ENCODE measurements at regions of chr5 and their contacts with region 1.

Region 1: GRCh38 chr5:147558826-147559225 is 49.0 kb upstream of the DPYSL3 start:
- DNase-seq: peak in 1 of 2 experiments; percentile 74
- H3K4me3 ChIP-seq: no peak overlapping the region
- H3K27ac ChIP-seq: no peak overlapping the region
- H3K4me1 ChIP-seq: peaks cover 5 to 26% (median 15%) of the 10 kb centered on the region in 4 experiments; a peak in 6 of 7 replicates
- H3K27me3 ChIP-seq: no peaks in the 10 kb centered on the region
- CTCF ChIP-seq: peak; percentile 59 to 83 (median 70)
- EP300 ChIP-seq: no peak
- POLR2A ChIP-seq: no peak
- RAD21 ChIP-seq: peak; percentile 86 to 91

Region 2: GRCh38 chr5:147321569-147321968 is 237.3 kb before region 1 on chr5:
- CTCF ChIA-PET with region 1: no interaction called
- POLR2A ChIA-PET with region 1: no interaction called
- DNase-seq: no peak
- H3K4me3 ChIP-seq: no peak overlapping the region
- H3K27ac ChIP-seq: no peak overlapping the region
- H3K4me1 ChIP-seq: peaks cover 0 to 2% (median 0%) of the 10 kb centered on the region in 4 experiments; a peak in 1 of 7 replicates
- H3K27me3 ChIP-seq: no peaks in the 10 kb centered on the region
- CTCF ChIP-seq: no peak
- EP300 ChIP-seq: no peak
- POLR2A ChIP-seq: no peak
- RAD21 ChIP-seq: no peak

Region 3: GRCh38 chr5:147391781-147392180 is 167.0 kb before region 1 on chr5:
- CTCF ChIA-PET with region 1: interaction called, 20 read pairs
- POLR2A ChIA-PET with region 1: interaction called, 4 read pairs
- DNase-seq: no peak
- H3K4me3 ChIP-seq: no peak overlapping the region
- H3K27ac ChIP-seq: no peak overlapping the region
- H3K4me1 ChIP-seq: peaks cover 4 to 10% (median 8%) of the 10 kb centered on the region in 4 experiments; a peak in 5 of 7 replicates
- H3K27me3 ChIP-seq: no peaks in the 10 kb centered on the region; a peak in 1 of 7 replicates
- CTCF ChIP-seq: peak; percentile 2 to 67 (median 16); a peak in 3 of 4 replicates
- EP300 ChIP-seq: no peak
- POLR2A ChIP-seq: peak in 1 of 2 experiments; percentile 45; a peak in 1 of 3 replicates
- RAD21 ChIP-seq: peak; percentile 50 to 65

Region 4: DNA sequence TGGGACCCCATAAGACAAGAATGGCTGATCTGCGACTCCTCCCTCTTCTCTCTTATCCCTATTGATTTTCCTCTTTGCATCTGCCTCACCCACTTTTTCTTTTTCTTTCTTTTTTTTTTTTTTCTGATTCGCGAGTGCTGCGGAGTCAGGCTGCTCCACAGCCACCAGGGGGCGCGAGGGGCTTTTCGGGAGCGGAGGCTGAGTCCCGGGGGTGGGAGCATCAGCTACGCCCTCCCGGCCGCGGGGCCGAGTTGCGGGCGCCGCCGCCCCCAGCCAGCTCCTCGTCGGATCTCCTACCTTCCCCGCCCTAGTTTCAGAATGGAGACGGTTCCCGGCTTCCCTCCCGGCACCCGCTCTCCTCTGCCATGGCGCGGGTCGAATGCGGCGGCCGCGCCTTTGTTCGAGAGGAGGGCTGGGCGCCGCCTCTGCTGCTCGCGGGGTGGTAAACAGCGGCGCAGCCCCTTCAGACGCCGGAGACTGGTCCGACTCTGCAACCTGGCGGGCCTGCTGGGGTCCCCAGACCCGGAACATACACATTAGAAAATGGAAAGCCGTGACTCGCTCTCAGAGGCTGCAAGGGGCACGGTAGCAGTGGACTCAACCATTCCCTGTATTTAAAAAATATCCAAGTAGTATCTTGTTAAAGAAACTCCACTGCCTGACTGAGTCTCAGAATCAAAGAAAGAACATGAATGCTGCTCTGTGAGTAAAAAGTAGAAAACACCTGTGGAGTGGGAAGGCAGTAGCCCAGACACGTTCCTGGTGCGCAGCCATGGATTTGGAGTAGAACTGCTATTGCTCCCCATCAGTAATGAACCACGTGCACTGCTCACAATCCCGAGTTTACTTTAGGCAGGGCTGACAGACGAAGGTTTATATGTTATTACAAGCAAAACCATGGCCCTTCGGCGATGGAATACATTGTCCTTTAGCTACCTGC is 104.7 kb before region 1 on chr5:
- CTCF ChIA-PET with region 1: interaction called, 48 read pairs
- POLR2A ChIA-PET with region 1: interaction called, 47 read pairs
- DNase-seq: peak; percentile 70 to 94
- H3K4me3 ChIP-seq: peak overlapping the region; percentile 80 to 98 (median 94)
- H3K27ac ChIP-seq: peak overlapping the region; percentile 79; the same call in 1 of the 2 replicates
- H3K4me1 ChIP-seq: peaks cover 9 to 30% (median 25%) of the 10 kb centered on the region in 4 experiments; a peak in 6 of 7 replicates
- H3K27me3 ChIP-seq: no peaks in the 10 kb centered on the region
- CTCF ChIP-seq: peak; percentile 70 to 83 (median 70)
- EP300 ChIP-seq: no peak
- POLR2A ChIP-seq: peak in 1 of 2 experiments; percentile 58; a peak in 2 of 3 replicates
- RAD21 ChIP-seq: peak; percentile 76 to 77

Region 5: DNA sequence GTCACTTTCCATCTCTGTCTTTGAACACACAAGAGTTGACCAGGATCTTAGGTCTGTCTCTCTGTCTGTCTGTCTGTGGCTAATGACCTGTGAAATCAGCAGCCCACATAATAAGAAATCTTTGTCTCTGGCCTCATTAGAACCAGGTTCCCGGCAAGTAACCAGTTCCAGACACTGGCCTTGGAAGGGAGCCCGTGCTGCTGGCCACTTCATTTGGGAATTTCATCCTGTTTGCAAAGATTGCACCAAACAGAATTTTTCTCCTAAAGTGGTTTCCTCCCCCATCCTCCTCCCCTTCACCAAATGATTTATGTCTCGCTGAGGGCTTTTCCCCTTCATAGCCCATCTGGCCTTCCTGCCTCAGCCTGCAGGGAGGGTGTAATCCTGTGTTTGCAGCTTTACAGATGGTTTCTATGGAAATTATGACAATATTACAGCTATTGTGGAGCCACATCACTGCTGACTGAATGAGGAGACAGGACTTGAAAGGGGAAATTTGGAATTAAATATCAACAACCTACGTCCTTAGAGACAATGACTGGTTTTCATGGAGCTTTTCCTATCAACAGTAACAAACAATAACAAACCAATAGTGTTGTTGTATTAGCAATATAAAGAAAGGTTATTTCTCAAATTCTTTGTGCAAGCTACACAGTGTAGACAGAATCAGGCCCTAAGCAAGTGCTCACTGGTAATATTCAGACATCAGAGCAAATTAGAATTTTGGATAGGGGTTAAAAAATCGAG is 74.7 kb before region 1 on chr5:
- CTCF ChIA-PET with region 1: interaction called, 38 read pairs
- POLR2A ChIA-PET with region 1: interaction called, 4 read pairs
- DNase-seq: no peak
- H3K4me3 ChIP-seq: no peak overlapping the region
- H3K27ac ChIP-seq: peak overlapping the region; percentile 15; the same call in 1 of the 2 replicates
- H3K4me1 ChIP-seq: peaks cover 0 to 24% (median 15%) of the 10 kb centered on the region in 4 experiments; a peak in 5 of 7 replicates
- H3K27me3 ChIP-seq: no peaks in the 10 kb centered on the region
- CTCF ChIP-seq: no peak
- EP300 ChIP-seq: no peak
- POLR2A ChIP-seq: no peak
- RAD21 ChIP-seq: no peak

Region 6: GRCh38 chr5:147509710-147510651 is 48.8 kb before region 1 on chr5 and contains the start of gene DPYSL3:
- CTCF ChIA-PET with region 1: interaction called, 10 read pairs
- POLR2A ChIA-PET with region 1: interaction called, 3 read pairs
- DNase-seq: peak; percentile 44 to 84
- H3K4me3 ChIP-seq: peak within 1 kb of the TSS; percentile 70 to 96 (median 90)
- H3K27ac ChIP-seq: peak within 1 kb of the TSS; percentile 68; the same call in 1 of the 2 replicates
- H3K4me1 ChIP-seq: peaks cover 3 to 11% (median 5%) of the 10 kb centered on the region in 4 experiments; a peak in 5 of 7 replicates
- H3K27me3 ChIP-seq: peaks cover 2 to 13% (median 12%) of the 10 kb centered on the region in 4 experiments; a peak in 5 of 7 replicates
- CTCF ChIP-seq: peak; percentile 28 to 66 (median 48); a peak in 3 of 4 replicates
- EP300 ChIP-seq: no peak
- POLR2A ChIP-seq: peak in 1 of 2 experiments; percentile 73; a peak in 2 of 3 replicates
- RAD21 ChIP-seq: peak; percentile 40 to 48
- total RNA-seq, gene DPYSL3: 385 and 387 TPM in 2 replicates

Region 7: GRCh38 chr5:147547730-147548129 is 11.1 kb before region 1 on chr5:
- CTCF ChIA-PET with region 1: interaction called, 14 read pairs
- POLR2A ChIA-PET with region 1: no interaction called
- DNase-seq: no peak
- H3K4me3 ChIP-seq: no peak overlapping the region
- H3K27ac ChIP-seq: no peak overlapping the region
- H3K4me1 ChIP-seq: no peaks in the 10 kb centered on the region
- H3K27me3 ChIP-seq: no peaks in the 10 kb centered on the region; a peak in 1 of 7 replicates
- CTCF ChIP-seq: no peak
- EP300 ChIP-seq: no peak
- POLR2A ChIP-seq: no peak
- RAD21 ChIP-seq: no peak